AG04449 (cell line): ENCODE measurements at regions of chr17 and their contacts with region 1.

Region 1: GRCh38 chr17:7989781-7990655 is 12.4 kb upstream of the GUCY2D start:
- DNase-seq: no peak
- H3K4me3 ChIP-seq: peak overlapping the region; percentile 66
- CTCF ChIP-seq: peak; percentile 97

Region 2: DNA sequence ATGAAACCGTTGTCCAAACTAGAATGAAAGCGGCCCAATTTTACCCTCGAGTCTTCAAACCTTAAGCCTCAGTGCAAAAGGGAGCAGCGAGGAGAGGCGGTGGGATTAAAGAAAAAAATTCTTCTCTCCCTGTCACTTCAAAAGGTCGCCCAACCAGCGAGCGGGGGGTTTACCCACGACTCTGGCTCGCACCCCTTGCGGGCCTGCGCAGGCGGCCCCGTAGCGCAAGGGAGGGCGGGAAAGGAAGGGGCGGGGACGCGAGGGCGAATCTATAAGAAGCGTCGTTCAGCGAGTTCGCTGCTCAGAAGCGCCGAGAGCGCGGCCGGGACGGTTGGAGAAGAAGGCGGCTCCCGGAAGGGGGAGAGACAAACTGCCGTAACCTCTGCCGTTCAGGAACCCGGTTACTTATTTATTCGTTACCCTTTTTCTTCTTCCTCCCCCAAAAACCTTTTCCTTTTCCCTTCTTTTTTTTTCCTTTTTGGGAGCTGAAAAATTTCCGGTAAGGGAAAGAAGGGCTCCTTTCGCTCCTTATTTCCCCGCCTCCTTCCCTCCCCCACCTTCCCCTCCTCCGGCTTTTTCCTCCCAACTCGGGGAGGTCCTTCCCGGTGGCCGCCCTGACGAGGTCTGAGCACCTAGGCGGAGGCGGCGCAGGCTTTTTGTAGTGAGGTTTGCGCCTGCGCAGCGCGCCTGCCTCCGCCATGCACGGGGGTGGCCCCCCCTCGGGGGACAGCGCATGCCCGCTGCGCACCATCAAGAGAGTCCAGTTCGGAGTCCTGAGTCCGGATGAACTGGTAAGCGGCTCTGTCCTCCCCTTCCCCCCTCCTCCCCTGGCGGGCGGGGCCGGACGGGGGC is 505.7 kb before region 1 on chr17 and contains the start of gene POLR2A:
- CTCF ChIA-PET with region 1: no interaction called
- POLR2A ChIA-PET with region 1: no interaction called
- DNase-seq: peak; percentile 87
- H3K4me3 ChIP-seq: peak within 1 kb of the TSS; percentile 87
- CTCF ChIP-seq: no peak

Region 3: GRCh38 chr17:7825206-7825990 is 164.6 kb before region 1 on chr17:
- CTCF ChIA-PET with region 1: interaction called, 41 read pairs
- POLR2A ChIA-PET with region 1: no interaction called
- DNase-seq: no peak
- H3K4me3 ChIP-seq: no peak overlapping the region
- CTCF ChIP-seq: no peak

Region 4: DNA sequence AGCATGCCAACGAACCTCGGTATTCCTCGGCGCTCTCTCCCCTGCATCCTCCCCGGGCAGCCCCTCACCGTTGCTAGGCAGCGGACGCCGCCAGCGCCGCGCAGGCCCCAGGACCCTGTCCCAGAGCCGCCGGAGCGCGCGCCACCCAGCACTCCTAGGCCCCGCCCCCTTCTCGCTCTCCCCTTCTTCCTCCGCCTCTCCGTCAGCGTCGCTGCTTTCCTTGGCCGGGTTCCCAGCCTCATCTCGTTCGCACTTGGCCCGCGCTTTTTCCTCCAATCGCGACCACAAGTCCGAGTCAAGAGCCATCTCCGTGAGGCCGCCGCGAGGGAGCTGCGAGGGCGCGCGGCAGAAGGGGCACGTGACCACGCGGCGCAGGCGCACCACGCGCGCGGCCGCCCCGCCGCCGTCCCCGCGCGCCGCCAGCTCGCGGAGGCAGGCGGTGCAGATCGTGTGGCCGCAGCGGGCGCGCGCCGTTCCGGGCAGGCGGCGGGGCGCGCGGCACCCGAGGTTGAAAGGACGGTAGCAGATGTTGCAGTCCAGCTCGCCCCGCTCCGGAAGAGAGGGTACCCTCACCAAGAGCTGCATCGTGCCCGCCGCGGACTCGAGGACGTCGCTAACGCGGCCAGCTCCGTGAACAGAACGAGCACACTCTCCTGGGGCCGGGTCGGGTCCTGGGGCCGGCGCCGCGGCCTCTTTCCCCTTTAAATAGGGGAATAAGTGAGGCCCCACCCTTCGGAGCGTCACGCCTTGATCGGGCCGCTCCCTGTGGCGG is 74.2 kb before region 1 on chr17 and contains the start of gene RNF227:
- CTCF ChIA-PET with region 1: interaction called, 499 read pairs
- POLR2A ChIA-PET with region 1: interaction called, 7 read pairs
- DNase-seq: peak; percentile 81
- H3K4me3 ChIP-seq: peak within 1 kb of the TSS; percentile 70
- CTCF ChIP-seq: no peak

Region 5: GRCh38 chr17:7951143-7951803 is 38.7 kb before region 1 on chr17:
- CTCF ChIA-PET with region 1: interaction called, 19 read pairs
- POLR2A ChIA-PET with region 1: no interaction called
- DNase-seq: no peak
- H3K4me3 ChIP-seq: no peak overlapping the region
- CTCF ChIP-seq: no peak

Region 6: GRCh38 chr17:8022360-8023003 is 32.5 kb after region 1 on chr17:
- CTCF ChIA-PET with region 1: interaction called, 33 read pairs
- POLR2A ChIA-PET with region 1: no interaction called
- DNase-seq: no peak
- H3K4me3 ChIP-seq: no peak overlapping the region
- CTCF ChIP-seq: no peak

Region 7: GRCh38 chr17:8209909-8210760 is 220.1 kb after region 1 on chr17 and contains the start of gene AURKB:
- CTCF ChIA-PET with region 1: no interaction called
- POLR2A ChIA-PET with region 1: no interaction called
- DNase-seq: peak; percentile 72
- H3K4me3 ChIP-seq: peak within 1 kb of the TSS; percentile 89
- CTCF ChIP-seq: no peak